ENCODE measurements at regions of chr11 and their contacts with region 1.

Region 1: GRCh38 chr11:91997226-91997625 is 227.4 kb upstream of the FAT3 start:
- DNase-seq: no peak
- H3K4me3 Mint-ChIP-seq: no peak overlapping the region
- H3K27ac Mint-ChIP-seq: no peak overlapping the region
- H3K4me1 Mint-ChIP-seq: no peaks in the 10 kb centered on the region
- H3K27me3 Mint-ChIP-seq: no peaks in the 10 kb centered on the region

Region 2: DNA sequence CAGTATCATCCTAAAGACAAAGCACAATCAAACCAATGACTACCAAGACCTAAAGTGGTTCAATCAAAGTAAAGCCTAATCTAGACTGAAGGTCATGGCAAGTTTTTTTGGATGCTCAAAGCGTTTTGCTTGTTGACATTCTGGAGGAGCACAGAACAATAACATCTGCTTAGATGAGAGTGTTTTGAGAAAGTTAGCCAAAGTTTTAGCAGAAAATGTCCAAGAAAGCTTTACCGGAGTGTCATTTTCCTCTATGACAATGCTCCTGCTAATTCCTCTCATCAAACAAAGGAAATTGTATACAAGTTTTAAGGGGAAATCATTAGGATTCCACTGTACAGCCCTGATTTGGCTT is 29.6 kb before region 1 on chr11:
- CTCF ChIA-PET with region 1: no interaction called
- POLR2A ChIA-PET with region 1: no interaction called
- intact Hi-C with region 1: loop called (anchors 1 kb)
- DNase-seq: no peak
- H3K4me3 Mint-ChIP-seq: no peak overlapping the region
- H3K27ac Mint-ChIP-seq: no peak overlapping the region
- H3K4me1 Mint-ChIP-seq: no peaks in the 10 kb centered on the region
- H3K27me3 Mint-ChIP-seq: no peaks in the 10 kb centered on the region

Region 3: GRCh38 chr11:92035488-92035887 is 38.3 kb after region 1 on chr11:
- CTCF ChIA-PET with region 1: no interaction called
- POLR2A ChIA-PET with region 1: no interaction called
- intact Hi-C with region 1: no loop called
- DNase-seq: no peak
- H3K4me3 Mint-ChIP-seq: no peak overlapping the region
- H3K27ac Mint-ChIP-seq: no peak overlapping the region
- H3K4me1 Mint-ChIP-seq: no peaks in the 10 kb centered on the region
- H3K27me3 Mint-ChIP-seq: no peaks in the 10 kb centered on the region

Region 4: GRCh38 chr11:92057849-92058442 is 60.7 kb after region 1 on chr11:
- CTCF ChIA-PET with region 1: no interaction called
- POLR2A ChIA-PET with region 1: no interaction called
- intact Hi-C with region 1: no loop called
- DNase-seq: no peak
- H3K4me3 Mint-ChIP-seq: no peak overlapping the region
- H3K27ac Mint-ChIP-seq: no peak overlapping the region
- H3K4me1 Mint-ChIP-seq: no peaks in the 10 kb centered on the region
- H3K27me3 Mint-ChIP-seq: no peaks in the 10 kb centered on the region

Measured in activated CD4-positive, alpha-beta memory T cell treated with anti-CD3 and anti-CD28 coated beads for 36 hours (primary cell).